A549 (cell line): ENCODE measurements at regions of chr1 and their contacts with region 1.

Region 1: GRCh38 chr1:100459358-100460114 is 78.4 kb upstream of the GPR88 start:
- DNase-seq: peak; percentile 31 to 73
- ATAC-seq: peak; percentile 97 to 99
- H3K4me3 ChIP-seq: no peak overlapping the region
- H3K27ac ChIP-seq: no peak overlapping the region
- H3K4me1 ChIP-seq: no peaks in the 10 kb centered on the region
- CTCF ChIP-seq: peak; percentile 72
- EP300 ChIP-seq: no peak
- POLR2A ChIP-seq: no peak
- RAD21 ChIP-seq: peak; percentile 84 to 86

Region 2: DNA sequence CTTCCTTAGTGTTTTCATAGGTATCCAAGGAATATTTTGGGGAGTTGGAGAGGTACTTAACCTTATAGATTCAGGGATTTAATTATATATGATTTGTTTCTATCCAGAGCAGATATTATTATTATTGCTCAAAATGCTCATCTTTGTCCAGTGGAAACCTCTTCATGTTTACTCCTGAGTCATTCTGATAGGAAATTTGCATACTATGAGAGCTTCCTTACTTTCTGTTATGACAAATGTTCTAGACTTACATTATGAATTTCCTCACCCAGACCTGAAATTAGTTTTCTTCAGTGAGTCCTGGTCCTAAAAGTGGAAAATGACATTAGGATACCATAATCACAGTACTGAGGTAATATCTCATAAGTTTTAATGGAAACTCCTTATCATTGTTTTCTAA is 1397.3 kb before region 1 on chr1:
- CTCF ChIA-PET with region 1: no interaction called
- POLR2A ChIA-PET with region 1: no interaction called
- DNase-seq: no peak
- ATAC-seq: no peak
- H3K4me3 ChIP-seq: no peak overlapping the region
- H3K27ac ChIP-seq: no peak overlapping the region
- H3K4me1 ChIP-seq: no peaks in the 10 kb centered on the region
- CTCF ChIP-seq: no peak
- EP300 ChIP-seq: no peak
- POLR2A ChIP-seq: no peak
- RAD21 ChIP-seq: no peak

Region 3: GRCh38 chr1:99808391-99809115 is 651.0 kb before region 1 on chr1:
- CTCF ChIA-PET with region 1: interaction called, 12 read pairs
- POLR2A ChIA-PET with region 1: no interaction called
- DNase-seq: peak; percentile 32 to 75
- ATAC-seq: peak; percentile 93 to 96
- H3K4me3 ChIP-seq: no peak overlapping the region
- H3K27ac ChIP-seq: peak overlapping the region in 1 of 2 experiments; percentile 52; a peak in 1 of 6 replicates
- H3K4me1 ChIP-seq: no peaks in the 10 kb centered on the region
- CTCF ChIP-seq: peak; percentile 75
- EP300 ChIP-seq: no peak
- POLR2A ChIP-seq: no peak
- RAD21 ChIP-seq: peak; percentile 80 to 82

Region 4: GRCh38 chr1:100449477-100449876 is 10.1 kb before region 1 on chr1:
- CTCF ChIA-PET with region 1: interaction called, 10 read pairs
- POLR2A ChIA-PET with region 1: no interaction called
- DNase-seq: no peak
- ATAC-seq: no peak
- H3K4me3 ChIP-seq: no peak overlapping the region
- H3K27ac ChIP-seq: no peak overlapping the region
- H3K4me1 ChIP-seq: no peaks in the 10 kb centered on the region
- CTCF ChIP-seq: no peak
- EP300 ChIP-seq: no peak
- POLR2A ChIP-seq: no peak
- RAD21 ChIP-seq: no peak

Region 5: GRCh38 chr1:100866041-100866900 is 406.7 kb after region 1 on chr1:
- CTCF ChIA-PET with region 1: interaction called, 138 read pairs
- POLR2A ChIA-PET with region 1: no interaction called
- DNase-seq: peak; percentile 5 to 28
- ATAC-seq: peak; percentile 64 to 70; a peak in 3 of 6 replicates
- H3K4me3 ChIP-seq: no peak overlapping the region
- H3K27ac ChIP-seq: 0 out of 6 replicates have a peak overlapping the region, but pooled peaks of 1 of the 2 experiments have one; percentile 17
- H3K4me1 ChIP-seq: 0 out of 3 replicates have a peak, but pooled peaks cover 3% of the 10 kb centered on the region
- CTCF ChIP-seq: peak; percentile 56
- EP300 ChIP-seq: no peak
- POLR2A ChIP-seq: no peak
- RAD21 ChIP-seq: peak; percentile 60 to 77